ENCODE measurements at regions of chr9 and their contacts with region 1.

Region 1: DNA sequence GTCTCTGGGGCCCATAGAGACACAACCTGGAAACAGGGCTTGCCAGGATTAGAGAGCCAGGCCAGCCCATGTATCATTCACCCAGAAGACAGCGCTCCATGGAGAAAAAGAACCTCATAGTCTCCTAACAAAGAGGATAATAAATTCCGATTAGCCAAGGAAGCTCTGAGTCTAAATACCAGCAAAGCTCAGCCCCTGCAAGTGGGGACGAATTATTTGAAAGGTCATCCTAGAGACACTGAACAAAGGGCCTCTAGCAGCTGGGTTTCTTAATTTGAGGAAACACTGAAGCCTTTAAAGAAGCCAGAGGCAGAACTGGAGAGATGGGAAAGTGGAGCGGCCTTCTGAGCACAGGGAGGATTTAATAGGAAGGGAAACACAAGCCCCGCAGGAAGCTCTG is 287.1 kb upstream of the ZNF462 start:
- DNase-seq: no peak
- ATAC-seq: no peak
- H3K4me3 Mint-ChIP-seq: no peak overlapping the region
- H3K27ac Mint-ChIP-seq: no peak overlapping the region
- H3K4me1 Mint-ChIP-seq: no peaks in the 10 kb centered on the region
- H3K27me3 Mint-ChIP-seq: no peaks in the 10 kb centered on the region

Region 2: DNA sequence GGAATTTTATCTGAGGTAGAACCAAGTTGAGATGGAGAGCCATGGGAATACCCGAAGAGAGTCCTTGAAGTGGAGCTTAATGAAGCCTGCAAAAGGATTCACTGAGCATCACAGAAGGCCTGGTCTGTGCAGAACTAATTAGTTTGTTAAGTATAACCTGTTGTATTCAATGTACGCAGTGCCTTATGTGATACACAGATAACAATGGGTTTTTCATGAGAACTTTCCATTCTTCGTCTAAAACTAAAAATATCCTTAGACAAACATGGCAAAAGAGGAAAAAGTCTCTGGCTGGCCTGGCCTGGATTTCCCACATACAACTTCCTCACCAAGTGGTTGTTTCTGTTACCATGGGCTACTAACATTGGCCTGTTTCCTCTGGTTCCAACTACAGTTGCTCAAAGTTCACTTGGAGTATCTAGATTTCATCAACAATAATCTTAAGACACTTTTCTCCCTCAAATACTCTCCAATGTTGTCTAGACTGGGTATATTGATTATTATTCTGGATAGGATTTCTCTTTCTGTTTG is 49.5 kb after region 1 on chr9:
- CTCF ChIA-PET with region 1: no interaction called
- POLR2A ChIA-PET with region 1: no interaction called
- intact Hi-C with region 1: loop called in 1 of 2 experiments (anchors 5 kb)
- DNase-seq: no peak
- ATAC-seq: no peak
- H3K4me3 Mint-ChIP-seq: no peak overlapping the region
- H3K27ac Mint-ChIP-seq: no peak overlapping the region
- H3K4me1 Mint-ChIP-seq: no peaks in the 10 kb centered on the region
- H3K27me3 Mint-ChIP-seq: no peaks in the 10 kb centered on the region

Region 3: GRCh38 chr9:106657926-106658325 is 82.1 kb after region 1 on chr9:
- CTCF ChIA-PET with region 1: no interaction called
- POLR2A ChIA-PET with region 1: no interaction called
- intact Hi-C with region 1: no loop called
- DNase-seq: no peak
- ATAC-seq: no peak
- H3K4me3 Mint-ChIP-seq: no peak overlapping the region
- H3K27ac Mint-ChIP-seq: no peak overlapping the region
- H3K4me1 Mint-ChIP-seq: no peaks in the 10 kb centered on the region
- H3K27me3 Mint-ChIP-seq: peaks cover 2% of the 10 kb centered on the region

Region 4: GRCh38 chr9:107080130-107080529 is 504.3 kb after region 1 on chr9:
- CTCF ChIA-PET with region 1: no interaction called
- POLR2A ChIA-PET with region 1: no interaction called
- intact Hi-C with region 1: no loop called
- DNase-seq: no peak
- ATAC-seq: no peak
- H3K4me3 Mint-ChIP-seq: no peak overlapping the region
- H3K27ac Mint-ChIP-seq: no peak overlapping the region
- H3K4me1 Mint-ChIP-seq: no peaks in the 10 kb centered on the region
- H3K27me3 Mint-ChIP-seq: peaks cover 8% of the 10 kb centered on the region

Measured in activated CD4-positive, alpha-beta T cell treated with anti-CD3 and anti-CD28 coated beads for 36 hours (primary cell).